Caco-2 (cell line): ENCODE measurements at regions of chr12 and their contacts with region 1.

Region 1: GRCh38 chr12:45284131-45284901 is 68.4 kb downstream of the ANO6 start:
- DNase-seq: peak; percentile 83
- H3K4me3 ChIP-seq: no peak overlapping the region
- H3K4me3 Mint-ChIP-seq: peak overlapping the region; percentile 67
- H3K27ac Mint-ChIP-seq: peak overlapping the region; percentile 78
- H3K4me1 ChIP-seq: peaks cover 87% of the 10 kb centered on the region
- H3K4me1 Mint-ChIP-seq: peaks cover 88% of the 10 kb centered on the region
- H3K27me3 ChIP-seq: no peaks in the 10 kb centered on the region
- H3K27me3 Mint-ChIP-seq: no peaks in the 10 kb centered on the region
- CTCF ChIP-seq: peak; percentile 24 to 27

Region 2: GRCh38 chr12:45148006-45148405 is 136.3 kb before region 1 on chr12:
- CTCF ChIA-PET with region 1: no interaction called
- POLR2A ChIA-PET with region 1: no interaction called
- intact Hi-C with region 1: no loop called
- DNase-seq: no peak
- H3K4me3 ChIP-seq: no peak overlapping the region
- H3K4me3 Mint-ChIP-seq: no peak overlapping the region
- H3K27ac Mint-ChIP-seq: no peak overlapping the region
- H3K4me1 ChIP-seq: no peaks in the 10 kb centered on the region
- H3K4me1 Mint-ChIP-seq: no peaks in the 10 kb centered on the region
- H3K27me3 ChIP-seq: no peaks in the 10 kb centered on the region
- H3K27me3 Mint-ChIP-seq: no peaks in the 10 kb centered on the region
- CTCF ChIP-seq: no peak

Region 3: DNA sequence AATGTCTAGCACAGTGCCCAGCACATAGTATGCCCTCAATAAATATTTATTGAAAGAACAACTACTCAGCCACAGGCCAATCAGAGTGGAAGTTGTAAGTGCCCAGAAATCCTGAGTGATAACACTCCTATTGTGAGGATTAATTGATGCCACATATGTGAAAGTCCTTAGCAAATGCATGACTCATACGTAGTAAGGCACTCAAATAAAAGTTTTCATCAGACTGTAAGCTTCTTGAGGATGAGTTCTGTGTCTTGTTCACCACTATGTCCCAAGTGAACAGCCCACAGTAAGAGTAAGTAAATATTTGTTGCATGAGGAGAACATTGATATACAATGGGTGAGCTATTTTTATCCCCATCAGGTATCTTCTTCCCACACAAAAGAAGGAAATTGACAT is 93.1 kb before region 1 on chr12:
- CTCF ChIA-PET with region 1: no interaction called
- POLR2A ChIA-PET with region 1: no interaction called
- intact Hi-C with region 1: loop called (anchors 1 kb)
- DNase-seq: no peak
- H3K4me3 ChIP-seq: no peak overlapping the region
- H3K4me3 Mint-ChIP-seq: no peak overlapping the region
- H3K27ac Mint-ChIP-seq: peak overlapping the region; percentile 95
- H3K4me1 ChIP-seq: peaks cover 57% of the 10 kb centered on the region
- H3K4me1 Mint-ChIP-seq: peaks cover 44% of the 10 kb centered on the region
- H3K27me3 ChIP-seq: no peaks in the 10 kb centered on the region
- H3K27me3 Mint-ChIP-seq: no peaks in the 10 kb centered on the region
- CTCF ChIP-seq: no peak

Region 4: DNA sequence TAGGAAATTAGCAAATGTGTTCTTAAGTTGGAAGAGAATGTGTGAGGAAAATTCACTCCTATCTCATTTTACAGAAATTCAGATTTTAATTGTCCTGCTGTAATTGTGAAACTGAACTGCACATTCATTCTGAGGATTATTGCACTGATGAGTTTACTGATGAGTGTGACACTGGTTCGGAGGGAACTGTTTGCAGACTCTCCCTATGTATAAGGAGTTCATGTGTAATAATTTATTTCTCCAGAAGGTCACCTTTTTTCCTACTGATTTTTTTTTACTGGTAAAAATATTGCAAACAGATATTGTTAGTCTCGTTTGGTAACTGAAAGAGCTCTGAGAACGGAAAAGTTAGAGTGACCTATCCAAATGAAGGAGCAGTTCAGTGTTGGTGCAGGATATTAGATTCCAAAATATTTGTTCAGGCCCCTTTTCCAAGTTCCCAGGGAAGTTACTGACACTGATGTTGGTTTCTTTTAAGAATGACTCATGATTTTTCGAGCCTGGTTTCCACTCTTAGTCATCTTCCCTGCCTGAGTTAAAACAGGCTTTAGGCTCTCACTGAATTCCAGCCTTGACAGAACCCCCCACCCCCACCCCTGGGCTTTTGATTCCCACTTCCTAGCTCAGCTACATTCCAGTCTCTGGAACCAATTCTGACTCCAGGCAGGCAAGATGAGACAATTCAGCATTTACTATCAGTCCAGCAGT is 50.0 kb before region 1 on chr12:
- CTCF ChIA-PET with region 1: no interaction called
- POLR2A ChIA-PET with region 1: no interaction called
- intact Hi-C with region 1: loop called (anchors 1 kb)
- DNase-seq: peak; percentile 47 to 55
- H3K4me3 ChIP-seq: no peak overlapping the region
- H3K4me3 Mint-ChIP-seq: peak overlapping the region; percentile 27
- H3K27ac Mint-ChIP-seq: peak overlapping the region; percentile 77
- H3K4me1 ChIP-seq: peaks cover 59% of the 10 kb centered on the region
- H3K4me1 Mint-ChIP-seq: peaks cover 53% of the 10 kb centered on the region
- H3K27me3 ChIP-seq: no peaks in the 10 kb centered on the region
- H3K27me3 Mint-ChIP-seq: no peaks in the 10 kb centered on the region
- CTCF ChIP-seq: no peak

Region 5: GRCh38 chr12:45268672-45269411 is 15.5 kb before region 1 on chr12:
- CTCF ChIA-PET with region 1: interaction called, 3 read pairs
- POLR2A ChIA-PET with region 1: interaction called, 3 read pairs
- intact Hi-C with region 1: loop called (anchors 1 kb)
- DNase-seq: peak in 1 of 2 experiments; percentile 62
- H3K4me3 ChIP-seq: no peak overlapping the region
- H3K4me3 Mint-ChIP-seq: no peak overlapping the region
- H3K27ac Mint-ChIP-seq: peak overlapping the region; percentile 13
- H3K4me1 ChIP-seq: peaks cover 62% of the 10 kb centered on the region
- H3K4me1 Mint-ChIP-seq: peaks cover 48% of the 10 kb centered on the region
- H3K27me3 ChIP-seq: no peaks in the 10 kb centered on the region
- H3K27me3 Mint-ChIP-seq: no peaks in the 10 kb centered on the region
- CTCF ChIP-seq: peak; percentile 45 to 63

Region 6: DNA sequence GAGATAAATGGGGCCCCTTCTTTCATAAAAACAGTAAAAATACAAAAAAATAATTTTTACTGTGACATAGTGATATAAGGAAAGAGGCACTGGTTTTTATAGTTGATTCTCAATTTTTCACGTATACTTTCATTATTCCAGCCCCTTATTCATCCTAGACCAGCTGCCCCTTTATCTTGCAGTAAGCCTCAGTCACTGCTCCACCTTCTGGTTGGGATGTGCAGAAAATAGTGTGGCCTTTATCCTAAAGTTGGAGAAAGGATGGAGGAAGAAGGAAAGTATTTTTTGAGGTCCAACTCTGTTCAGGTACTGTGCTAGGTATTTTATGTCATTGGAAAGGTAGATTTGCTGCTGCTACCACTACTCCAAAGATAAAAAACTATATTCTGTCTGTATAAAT is 104.2 kb after region 1 on chr12:
- CTCF ChIA-PET with region 1: interaction called, 5 read pairs
- POLR2A ChIA-PET with region 1: no interaction called
- intact Hi-C with region 1: loop called (anchors 5 kb)
- DNase-seq: peak; percentile 49 to 51
- H3K4me3 ChIP-seq: no peak overlapping the region
- H3K4me3 Mint-ChIP-seq: no peak overlapping the region
- H3K27ac Mint-ChIP-seq: no peak overlapping the region
- H3K4me1 ChIP-seq: no peaks in the 10 kb centered on the region
- H3K4me1 Mint-ChIP-seq: peaks cover 5% of the 10 kb centered on the region
- H3K27me3 ChIP-seq: no peaks in the 10 kb centered on the region
- H3K27me3 Mint-ChIP-seq: no peaks in the 10 kb centered on the region
- CTCF ChIP-seq: peak; percentile 59 to 81

Region 7: GRCh38 chr12:45433441-45433868 is 149.1 kb after region 1 on chr12:
- CTCF ChIA-PET with region 1: no interaction called
- POLR2A ChIA-PET with region 1: no interaction called
- intact Hi-C with region 1: loop called (anchors 5 kb)
- DNase-seq: peak; percentile 90 to 96
- H3K4me3 ChIP-seq: no peak overlapping the region
- H3K4me3 Mint-ChIP-seq: peak overlapping the region; percentile 59
- H3K27ac Mint-ChIP-seq: peak overlapping the region; percentile 97
- H3K4me1 ChIP-seq: peaks cover 48% of the 10 kb centered on the region
- H3K4me1 Mint-ChIP-seq: peaks cover 44% of the 10 kb centered on the region
- H3K27me3 ChIP-seq: no peaks in the 10 kb centered on the region
- H3K27me3 Mint-ChIP-seq: no peaks in the 10 kb centered on the region
- CTCF ChIP-seq: no peak